WTC11 (cell line): ENCODE measurements at regions of chr13 and their contacts with region 1.

Region 1: GRCh38 chr13:57624565-57625435 is 6.7 kb upstream of the PCDH17 start:
- DNase-seq: peak; percentile 49
- ATAC-seq: peak; percentile 91
- H3K4me3 Mint-ChIP-seq: peak overlapping the region; percentile 45
- H3K27ac Mint-ChIP-seq: no peak overlapping the region
- H3K4me1 Mint-ChIP-seq: peaks cover 22% of the 10 kb centered on the region
- H3K27me3 Mint-ChIP-seq: peaks cover 27% of the 10 kb centered on the region
- CTCF ChIP-seq: peak; percentile 87

Region 2: GRCh38 chr13:57558051-57558467 is 66.7 kb before region 1 on chr13:
- CTCF ChIA-PET with region 1: interaction called, 10 read pairs
- POLR2A ChIA-PET with region 1: no interaction called
- DNase-seq: no peak
- ATAC-seq: peak; percentile 73
- H3K4me3 Mint-ChIP-seq: no peak overlapping the region
- H3K27ac Mint-ChIP-seq: no peak overlapping the region
- H3K4me1 Mint-ChIP-seq: no peaks in the 10 kb centered on the region
- H3K27me3 Mint-ChIP-seq: no peaks in the 10 kb centered on the region; the same call in 1 of the 2 replicates
- CTCF ChIP-seq: peak; percentile 53

Region 3: DNA sequence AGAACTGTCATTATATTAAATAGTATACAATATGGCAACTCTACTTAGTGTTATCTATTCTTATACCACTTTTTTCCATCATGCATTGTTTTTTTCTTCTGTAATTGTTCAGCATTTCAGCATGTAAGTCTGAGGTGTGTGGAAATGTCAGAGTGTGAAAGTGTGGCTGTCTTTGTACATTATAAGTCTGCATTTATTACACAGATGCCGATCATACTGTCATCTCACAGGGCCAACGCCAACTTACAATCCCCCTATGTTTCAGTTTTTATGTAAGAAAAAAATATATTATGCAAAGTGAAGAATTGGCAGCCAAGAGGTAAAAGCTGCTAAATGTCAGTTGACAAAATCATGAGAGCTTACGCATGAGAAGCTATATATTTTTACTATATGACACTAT is 36.2 kb before region 1 on chr13:
- CTCF ChIA-PET with region 1: interaction called, 94 read pairs
- POLR2A ChIA-PET with region 1: no interaction called
- DNase-seq: no peak
- ATAC-seq: no peak
- H3K4me3 Mint-ChIP-seq: no peak overlapping the region
- H3K27ac Mint-ChIP-seq: no peak overlapping the region
- H3K4me1 Mint-ChIP-seq: peaks cover 8% of the 10 kb centered on the region
- H3K27me3 Mint-ChIP-seq: no peaks in the 10 kb centered on the region
- CTCF ChIP-seq: no peak

Region 4: DNA sequence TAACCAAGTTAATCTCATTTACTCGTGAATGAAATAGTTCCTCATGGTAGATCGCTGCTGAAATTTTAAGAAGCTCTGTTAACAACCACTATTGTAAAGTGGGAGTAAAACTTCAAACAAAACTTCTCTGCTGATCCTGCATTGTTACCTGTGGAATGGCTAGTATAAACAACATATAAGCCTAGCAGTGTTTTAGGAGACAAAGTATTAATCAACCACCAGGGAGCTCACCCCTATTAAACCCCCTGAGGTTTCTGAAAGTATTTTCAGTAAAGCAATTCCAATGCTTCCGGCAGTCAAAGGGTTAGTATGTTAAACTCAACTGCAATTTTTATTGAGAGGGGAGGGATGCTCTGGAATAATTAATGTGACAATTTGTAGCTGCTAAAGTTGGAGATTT is 23.3 kb before region 1 on chr13:
- CTCF ChIA-PET with region 1: interaction called, 33 read pairs
- POLR2A ChIA-PET with region 1: no interaction called
- DNase-seq: no peak
- ATAC-seq: peak; percentile 64
- H3K4me3 Mint-ChIP-seq: no peak overlapping the region
- H3K27ac Mint-ChIP-seq: peak overlapping the region; percentile 46
- H3K4me1 Mint-ChIP-seq: peaks cover 36% of the 10 kb centered on the region
- H3K27me3 Mint-ChIP-seq: no peaks in the 10 kb centered on the region
- CTCF ChIP-seq: no peak

Region 5: GRCh38 chr13:57653229-57653989 is 28.6 kb after region 1 on chr13:
- CTCF ChIA-PET with region 1: interaction called, 10 read pairs
- POLR2A ChIA-PET with region 1: no interaction called
- DNase-seq: no peak
- ATAC-seq: no peak
- H3K4me3 Mint-ChIP-seq: no peak overlapping the region
- H3K27ac Mint-ChIP-seq: no peak overlapping the region
- H3K4me1 Mint-ChIP-seq: peaks cover 8% of the 10 kb centered on the region
- H3K27me3 Mint-ChIP-seq: no peaks in the 10 kb centered on the region
- CTCF ChIP-seq: no peak

Region 6: DNA sequence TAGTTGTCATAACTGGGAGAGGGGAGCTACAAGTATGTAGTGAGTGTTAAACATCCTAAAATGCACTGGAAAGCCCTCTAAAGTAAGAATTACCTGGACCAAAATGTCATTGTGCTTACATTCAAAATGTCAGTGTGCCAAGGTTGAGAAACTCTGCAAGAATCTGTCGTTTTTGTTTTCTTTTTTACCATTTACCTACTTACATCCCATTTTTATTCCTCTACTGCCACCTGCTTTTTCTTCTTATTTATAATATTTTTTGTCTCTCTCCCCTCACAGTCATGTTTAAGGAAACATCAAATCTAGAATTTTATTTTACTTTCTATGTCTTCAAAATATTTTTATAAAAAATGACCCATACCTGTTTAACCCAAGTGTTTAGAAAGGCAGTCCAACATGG is 233.1 kb after region 1 on chr13:
- CTCF ChIA-PET with region 1: interaction called, 10 read pairs
- POLR2A ChIA-PET with region 1: no interaction called
- DNase-seq: no peak
- ATAC-seq: no peak
- H3K4me3 Mint-ChIP-seq: no peak overlapping the region
- H3K27ac Mint-ChIP-seq: no peak overlapping the region
- H3K4me1 Mint-ChIP-seq: peaks cover 4% of the 10 kb centered on the region; the same call in 1 of the 2 replicates
- H3K27me3 Mint-ChIP-seq: no peaks in the 10 kb centered on the region
- CTCF ChIP-seq: no peak